HEK293 (cell line): ENCODE measurements at regions of chr22 and their contacts with region 1.

Region 1: DNA sequence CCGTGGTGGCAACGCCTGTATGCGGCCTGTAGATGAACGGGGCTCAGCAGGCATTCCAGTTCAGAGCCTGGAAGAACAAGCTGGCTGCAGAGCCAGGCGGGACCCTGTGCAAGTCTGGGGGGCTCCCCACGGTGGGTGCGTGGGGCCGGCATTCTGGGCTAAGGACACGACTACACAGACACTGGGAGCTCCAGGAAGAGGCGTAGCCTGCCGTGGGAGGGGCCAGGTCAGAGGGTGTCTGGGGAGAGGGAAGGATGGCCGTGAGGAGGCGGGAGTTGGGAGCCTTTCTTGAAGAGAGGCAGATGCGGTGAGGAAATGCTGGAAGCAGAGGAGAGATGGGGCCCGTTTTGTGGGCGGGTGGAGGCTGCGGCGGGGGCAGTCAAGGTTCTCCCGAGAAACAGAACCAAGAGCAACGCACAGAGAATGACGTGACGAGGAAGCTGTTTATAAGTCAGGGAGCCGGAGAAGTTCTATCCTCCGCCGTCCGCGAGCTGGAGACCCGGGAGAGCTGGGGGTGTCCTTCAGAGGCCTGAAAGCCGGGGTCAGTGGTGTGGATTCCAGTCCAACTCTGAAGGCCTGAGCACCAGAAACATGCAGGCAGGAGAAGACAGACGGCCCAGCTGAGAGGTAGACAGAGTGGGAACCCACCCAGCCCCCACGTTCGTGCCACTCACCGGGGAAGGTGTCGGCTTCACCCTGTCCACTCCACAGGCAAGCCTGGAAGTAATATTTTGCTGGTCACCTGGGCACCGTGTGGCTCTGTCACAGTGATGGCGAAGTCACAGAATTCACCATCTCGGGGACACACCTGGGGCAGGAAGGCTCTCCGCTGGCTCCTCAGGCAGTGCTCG is 529.6 kb downstream of the BRD1 start:
- H3K4me3 ChIP-seq: no peak overlapping the region
- H3K27ac ChIP-seq: no peak overlapping the region
- H3K4me1 ChIP-seq: no peaks in the 10 kb centered on the region
- CTCF ChIP-seq: no peak

Region 2: DNA sequence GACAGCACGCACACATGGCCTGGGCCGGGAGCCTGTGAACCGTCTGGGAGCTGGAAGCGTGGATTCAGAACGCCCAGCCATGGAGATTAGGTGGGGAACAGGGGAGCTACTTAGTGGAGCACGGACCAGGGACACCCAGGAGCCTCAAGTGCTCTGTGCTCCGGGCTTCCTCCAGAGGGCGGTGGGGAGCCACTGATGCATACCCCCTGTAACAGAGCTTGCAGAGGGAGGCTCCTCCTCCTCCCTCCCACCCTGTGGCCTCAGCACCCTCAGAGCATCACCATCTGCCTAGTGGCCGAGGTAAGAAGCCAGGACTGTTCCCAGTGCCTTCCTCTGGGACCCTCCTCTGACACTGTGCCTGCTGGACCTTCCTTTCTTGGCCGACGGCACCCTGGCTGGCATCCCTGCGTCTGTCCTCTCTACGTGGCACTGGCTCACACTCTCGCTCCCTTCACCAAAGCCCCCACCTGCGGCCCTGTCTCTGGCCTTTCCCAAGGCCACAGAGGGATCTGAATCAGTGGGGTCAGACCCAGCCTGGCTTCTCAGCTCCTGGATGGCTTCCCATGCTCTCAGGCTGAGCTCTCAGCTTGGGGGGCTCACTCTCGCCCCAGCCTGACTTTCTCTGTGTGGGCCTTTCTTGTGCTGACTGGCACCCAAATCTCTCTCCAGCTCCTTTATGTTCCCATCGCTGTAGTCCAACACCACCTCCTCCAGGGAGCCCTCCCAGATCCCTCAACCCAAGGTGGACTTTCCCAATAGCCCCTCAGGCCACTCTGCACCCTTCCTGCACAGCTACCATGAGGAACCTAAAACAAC is 251.3 kb before region 1 on chr22:
- CTCF ChIA-PET with region 1: interaction called, 10 read pairs
- POLR2A ChIA-PET with region 1: no interaction called
- H3K4me3 ChIP-seq: no peak overlapping the region
- H3K27ac ChIP-seq: no peak overlapping the region
- H3K4me1 ChIP-seq: no peaks in the 10 kb centered on the region
- CTCF ChIP-seq: peak; percentile 37; the same call in 1 of the 2 replicates